Activated CD4-positive, alpha-beta T cell treated with anti-CD3 and anti-CD28 coated beads for 36 hours (primary cell): ENCODE measurements at regions of chr4 and their contacts with region 1.

Region 1: DNA sequence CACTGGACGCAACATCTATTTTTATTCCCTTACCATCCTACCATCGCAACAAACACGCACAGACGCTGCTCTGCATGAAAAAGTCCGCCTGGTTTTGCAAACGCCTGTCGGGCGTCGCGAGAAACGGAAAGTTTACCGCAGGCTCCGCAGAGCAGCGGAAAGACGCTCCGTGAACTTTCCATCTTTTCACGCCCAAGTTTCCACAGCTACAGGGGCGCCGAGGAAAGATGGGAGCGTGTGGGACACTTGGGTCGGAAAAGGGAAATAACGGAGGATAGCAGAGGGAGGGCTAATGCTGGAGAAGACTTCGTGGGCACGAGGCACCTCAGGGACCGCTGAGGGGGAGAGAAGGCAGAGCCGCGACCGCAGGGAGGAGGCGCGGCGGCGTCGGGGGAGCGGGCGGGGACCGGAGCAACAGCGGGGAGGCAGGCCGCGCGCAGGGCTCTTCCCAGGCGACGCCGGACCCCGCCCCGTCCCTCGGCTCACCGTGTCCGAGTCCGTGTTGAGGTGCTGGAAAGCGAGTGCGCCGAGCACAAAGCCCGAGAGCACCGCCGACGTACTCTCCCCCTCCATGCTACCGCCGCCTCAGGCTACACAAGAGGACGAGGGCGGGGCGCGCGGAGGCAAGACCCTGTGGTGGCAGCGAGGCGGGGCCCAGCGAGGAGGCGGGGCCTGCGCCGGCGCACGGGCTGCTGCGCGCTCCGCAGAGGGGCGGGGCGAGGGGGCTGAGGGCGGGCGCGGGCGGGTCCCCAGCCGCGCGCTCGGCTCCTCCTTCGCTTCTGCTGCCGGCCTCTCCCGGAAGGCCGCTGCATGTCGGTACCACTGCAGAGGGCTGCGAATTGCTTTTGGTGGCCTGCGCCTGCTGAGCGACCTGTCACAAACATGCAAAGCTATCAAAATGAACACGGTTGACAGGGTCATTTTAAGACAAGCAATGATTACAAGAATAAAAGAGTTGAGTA is at the start of gene ABRAXAS1:
- DNase-seq: peak; percentile 97
- ATAC-seq: peak; percentile 95
- H3K4me3 Mint-ChIP-seq: peak within 1 kb of the TSS; percentile 91
- H3K27ac Mint-ChIP-seq: peak within 1 kb of the TSS; percentile 94
- H3K4me1 Mint-ChIP-seq: peaks cover 10% of the 10 kb centered on the region
- H3K27me3 Mint-ChIP-seq: no peaks in the 10 kb centered on the region
- total RNA-seq, gene ABRAXAS1: 19.2 to 22.6 TPM

Region 2: DNA sequence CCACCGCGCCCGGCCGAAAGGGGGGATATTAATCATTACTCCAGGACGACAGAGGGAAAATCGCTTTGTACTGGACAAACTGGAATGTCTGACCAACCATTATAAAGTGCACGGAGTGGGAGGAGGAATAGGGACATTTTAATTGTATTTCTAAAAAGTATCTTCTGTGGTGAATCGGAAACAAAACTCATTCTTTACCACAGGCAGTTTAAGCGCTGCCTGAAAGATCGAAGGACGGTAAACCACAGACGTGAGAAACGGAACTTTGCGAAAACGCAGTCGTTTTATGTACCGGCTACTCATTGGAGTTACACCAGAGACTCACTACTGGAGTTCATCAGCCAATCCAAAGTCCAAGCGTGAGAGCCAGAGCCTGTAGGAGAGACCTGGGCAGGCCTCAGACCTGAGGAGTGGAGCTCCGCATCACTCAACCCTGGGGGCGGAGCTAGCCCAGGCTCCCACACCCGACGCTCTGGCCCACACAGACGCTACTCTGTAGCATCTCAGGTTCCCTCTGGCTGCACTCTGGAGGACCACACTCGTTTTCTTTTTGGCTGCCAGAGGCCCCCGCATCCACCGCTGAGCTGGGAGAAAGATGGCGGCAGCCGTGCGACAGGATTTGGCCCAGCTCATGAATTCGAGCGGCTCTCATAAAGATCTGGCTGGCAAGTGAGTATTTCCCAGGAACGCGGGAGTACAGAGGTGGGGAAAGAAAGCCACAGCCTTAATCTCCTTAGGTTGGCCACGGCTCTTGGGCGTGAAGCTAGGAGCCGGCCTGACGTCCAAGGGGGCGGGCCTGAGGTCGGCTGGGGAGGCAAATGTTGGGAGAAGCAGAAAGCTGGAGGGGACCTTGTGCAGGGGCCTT is 449.9 kb before region 1 on chr4 and contains the start of gene COPS4:
- CTCF ChIA-PET with region 1: no interaction called
- POLR2A ChIA-PET with region 1: no interaction called
- intact Hi-C with region 1: loop called in 1 of 2 experiments (anchors 1 kb)
- DNase-seq: peak; percentile 97
- ATAC-seq: peak; percentile 97
- H3K4me3 Mint-ChIP-seq: peak within 1 kb of the TSS; percentile 91
- H3K27ac Mint-ChIP-seq: peak within 1 kb of the TSS; percentile 94
- H3K4me1 Mint-ChIP-seq: peaks cover 22% of the 10 kb centered on the region
- H3K27me3 Mint-ChIP-seq: no peaks in the 10 kb centered on the region
- total RNA-seq, gene COPS4: 35.7 to 35.9 TPM

Region 3: GRCh38 chr4:83535520-83536361 is 51.0 kb after region 1 on chr4 and contains the start of gene GPAT3:
- CTCF ChIA-PET with region 1: no interaction called
- POLR2A ChIA-PET with region 1: no interaction called
- intact Hi-C with region 1: loop called in 1 of 2 experiments (anchors 1 kb)
- DNase-seq: peak; percentile 84
- ATAC-seq: peak; percentile 92
- H3K4me3 Mint-ChIP-seq: peak within 1 kb of the TSS; percentile 73
- H3K27ac Mint-ChIP-seq: peak within 1 kb of the TSS; percentile 49
- H3K4me1 Mint-ChIP-seq: peaks cover 16% of the 10 kb centered on the region
- H3K27me3 Mint-ChIP-seq: peaks cover 31% of the 10 kb centered on the region
- total RNA-seq, gene GPAT3: 1.3 to 1.6 TPM

Region 4: GRCh38 chr4:83548151-83548905 is 63.5 kb after region 1 on chr4:
- CTCF ChIA-PET with region 1: interaction called, 3 read pairs
- POLR2A ChIA-PET with region 1: no interaction called
- intact Hi-C with region 1: loop called in 1 of 2 experiments (anchors 2 kb)
- DNase-seq: peak; percentile 87
- ATAC-seq: peak; percentile 98
- H3K4me3 Mint-ChIP-seq: no peak overlapping the region
- H3K27ac Mint-ChIP-seq: no peak overlapping the region
- H3K4me1 Mint-ChIP-seq: peaks cover 7% of the 10 kb centered on the region
- H3K27me3 Mint-ChIP-seq: no peaks in the 10 kb centered on the region

Region 5: DNA sequence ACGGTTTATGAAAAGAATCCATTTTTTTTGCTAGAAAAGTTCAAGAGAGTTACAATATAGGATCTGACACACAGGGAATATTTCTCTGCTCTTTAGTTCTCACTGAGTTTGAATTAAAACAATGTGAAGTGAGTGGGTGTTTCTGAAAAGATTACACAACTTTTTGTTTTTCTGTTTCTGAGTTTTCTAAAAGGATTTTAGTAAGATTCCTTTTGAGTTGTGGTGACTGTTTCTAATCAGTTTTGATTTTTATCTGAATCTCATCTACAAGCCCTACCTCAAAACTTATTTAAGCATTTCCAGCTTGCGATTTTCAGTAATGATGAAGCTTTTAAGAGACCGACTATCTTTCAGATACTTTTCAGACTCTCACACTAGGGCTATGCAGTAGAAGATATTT is 192.9 kb after region 1 on chr4:
- CTCF ChIA-PET with region 1: no interaction called
- POLR2A ChIA-PET with region 1: no interaction called
- intact Hi-C with region 1: no loop called
- DNase-seq: no peak
- ATAC-seq: no peak
- H3K4me3 Mint-ChIP-seq: no peak overlapping the region
- H3K27ac Mint-ChIP-seq: no peak overlapping the region
- H3K4me1 Mint-ChIP-seq: no peaks in the 10 kb centered on the region
- H3K27me3 Mint-ChIP-seq: peaks cover 41% of the 10 kb centered on the region

Region 6: DNA sequence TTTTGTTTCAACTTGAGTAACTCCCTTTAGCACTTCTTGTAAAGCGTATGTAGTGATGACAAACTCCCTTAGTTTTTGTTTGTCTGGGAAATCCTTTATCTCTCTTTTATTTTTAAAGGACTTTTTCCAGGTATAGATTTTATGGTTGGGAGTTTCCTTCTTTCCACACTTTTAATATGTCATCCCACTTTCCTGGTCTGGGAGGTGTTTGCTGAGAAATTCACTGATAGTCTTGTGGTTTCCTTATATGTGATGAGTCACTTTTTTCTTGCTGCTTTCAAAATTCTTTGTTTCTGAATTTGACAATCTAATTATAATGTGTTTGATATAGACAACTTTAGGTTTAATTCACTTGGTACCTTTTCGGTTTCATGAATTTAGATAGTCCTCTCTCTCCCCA is 405.0 kb after region 1 on chr4:
- CTCF ChIA-PET with region 1: no interaction called
- POLR2A ChIA-PET with region 1: no interaction called
- intact Hi-C with region 1: no loop called
- DNase-seq: no peak
- ATAC-seq: no peak
- H3K4me3 Mint-ChIP-seq: no peak overlapping the region
- H3K27ac Mint-ChIP-seq: no peak overlapping the region
- H3K4me1 Mint-ChIP-seq: peaks cover 2% of the 10 kb centered on the region
- H3K27me3 Mint-ChIP-seq: peaks cover 7% of the 10 kb centered on the region

Region 7: GRCh38 chr4:84582302-84583000 is 1097.7 kb after region 1 on chr4:
- CTCF ChIA-PET with region 1: no interaction called
- POLR2A ChIA-PET with region 1: no interaction called
- intact Hi-C with region 1: loop called in 1 of 2 experiments (anchors 10 kb)
- DNase-seq: peak; percentile 93
- ATAC-seq: peak; percentile 79
- H3K4me3 Mint-ChIP-seq: peak overlapping the region; percentile 68
- H3K27ac Mint-ChIP-seq: no peak overlapping the region
- H3K4me1 Mint-ChIP-seq: peaks cover 15% of the 10 kb centered on the region
- H3K27me3 Mint-ChIP-seq: peaks cover 46% of the 10 kb centered on the region